ENCODE measurements at regions of chr11 and their contacts with region 1.

Region 1: GRCh38 chr11:12200279-12201010 is 90.1 kb downstream of the MICAL2 start:
- DNase-seq: peak in 1 of 4 experiments; percentile 32
- ATAC-seq: peak; percentile 1; the same call in 1 of the 3 replicates
- H3K4me3 ChIP-seq: no peak overlapping the region
- H3K27ac ChIP-seq: peak overlapping the region; percentile 89
- H3K4me1 ChIP-seq: peaks cover 28 to 58% of the 10 kb centered on the region in 2 experiments
- H3K27me3 ChIP-seq: no peaks in the 10 kb centered on the region; a peak in 1 of 5 replicates
- CTCF ChIP-seq: no peak
- EP300 ChIP-seq: no peak
- POLR2A ChIP-seq: no peak
- RAD21 ChIP-seq: no peak

Region 2: GRCh38 chr11:12087075-12088004 is 113.1 kb before region 1 on chr11:
- CTCF ChIA-PET with region 1: no interaction called
- POLR2A ChIA-PET with region 1: no interaction called
- in situ Hi-C with region 1: no loop called
- intact Hi-C with region 1: loop called (anchors 1 kb)
- DNase-seq: peak in 2 of 4 experiments; percentile 28 to 31
- ATAC-seq: peak; percentile 58
- H3K4me3 ChIP-seq: no peak overlapping the region
- H3K27ac ChIP-seq: no peak overlapping the region
- H3K4me1 ChIP-seq: peaks cover 14 to 20% of the 10 kb centered on the region in 2 experiments
- H3K27me3 ChIP-seq: peaks cover 0 to 9% of the 10 kb centered on the region in 2 experiments; a peak in 1 of 5 replicates
- CTCF ChIP-seq: no peak
- EP300 ChIP-seq: no peak
- POLR2A ChIP-seq: no peak
- RAD21 ChIP-seq: no peak

Region 3: DNA sequence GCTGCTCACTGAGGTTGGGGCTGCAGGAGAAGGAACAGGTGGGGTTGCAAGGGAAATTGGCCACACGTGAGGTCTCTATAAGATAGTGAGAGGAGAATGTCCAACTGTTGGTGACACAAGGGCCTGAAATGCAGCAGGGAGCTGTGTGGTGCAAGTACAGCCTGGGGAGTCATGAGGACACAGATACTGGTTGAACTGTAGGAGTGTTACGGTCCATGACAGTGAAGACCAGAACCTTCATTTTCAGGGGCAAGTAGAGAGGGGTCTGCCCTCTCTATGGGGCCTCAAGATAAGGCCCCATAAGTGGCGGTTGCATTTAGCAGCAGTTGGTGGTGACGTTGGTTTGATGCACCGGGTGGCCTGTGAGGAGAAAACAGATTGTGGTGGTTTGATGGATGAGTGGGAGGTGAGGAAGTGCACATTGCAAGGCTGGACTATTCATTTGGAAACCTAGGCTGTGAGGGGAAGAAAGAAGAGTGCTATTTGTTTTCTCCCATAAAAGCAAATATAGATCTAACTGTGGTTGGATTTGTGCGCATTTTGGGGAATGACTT is 50.7 kb before region 1 on chr11:
- CTCF ChIA-PET with region 1: no interaction called
- POLR2A ChIA-PET with region 1: interaction called, 7 read pairs
- in situ Hi-C with region 1: no loop called
- intact Hi-C with region 1: loop called (anchors 2 kb)
- DNase-seq: peak; percentile 58 to 91 (median 74)
- ATAC-seq: peak; percentile 82
- H3K4me3 ChIP-seq: peak overlapping the region; percentile 11; the same call in 1 of the 2 replicates
- H3K27ac ChIP-seq: peak overlapping the region; percentile 97
- H3K4me1 ChIP-seq: peaks cover 32 to 51% of the 10 kb centered on the region in 2 experiments
- H3K27me3 ChIP-seq: no peaks in the 10 kb centered on the region
- CTCF ChIP-seq: no peak
- EP300 ChIP-seq: peak; percentile 91
- POLR2A ChIP-seq: 0 out of 2 replicates have a peak, but pooled peaks have one; percentile 25
- RAD21 ChIP-seq: peak in 1 of 2 experiments; percentile 20; a peak in 3 of 4 replicates

Region 4: DNA sequence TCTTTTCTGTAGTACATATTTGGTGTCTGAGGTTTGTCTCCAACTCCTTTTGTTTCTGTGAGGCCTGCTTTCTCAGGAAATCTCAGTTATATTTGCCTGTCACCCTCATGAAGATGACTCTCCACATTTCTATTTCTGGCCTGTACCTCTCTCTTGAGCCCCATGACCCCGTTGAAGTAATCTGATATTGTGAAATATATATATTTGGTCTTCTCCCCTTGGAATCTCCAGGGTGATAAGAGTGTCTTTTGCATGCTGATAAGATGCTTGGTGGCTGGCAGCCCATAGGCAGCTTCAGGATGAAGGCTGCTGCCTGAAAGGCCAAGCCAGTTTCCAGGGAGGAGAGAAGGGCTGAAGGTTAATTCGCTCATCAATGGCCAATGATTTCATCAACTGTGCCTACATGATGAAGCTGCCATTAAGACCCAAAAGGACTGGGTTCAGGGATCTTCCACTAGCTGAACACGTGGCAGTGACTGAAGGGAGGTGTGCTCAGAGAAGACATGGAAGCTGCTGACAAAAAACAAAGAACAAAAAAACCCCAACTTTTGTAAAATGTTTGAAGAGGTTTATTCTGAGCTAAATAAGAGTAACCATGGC is 22.6 kb before region 1 on chr11:
- CTCF ChIA-PET with region 1: no interaction called
- POLR2A ChIA-PET with region 1: interaction called, 10 read pairs
- in situ Hi-C with region 1: no loop called
- intact Hi-C with region 1: loop called (anchors 2 kb)
- DNase-seq: peak in 1 of 4 experiments; percentile 59
- ATAC-seq: no peak
- H3K4me3 ChIP-seq: no peak overlapping the region
- H3K27ac ChIP-seq: no peak overlapping the region
- H3K4me1 ChIP-seq: peaks cover 30 to 66% of the 10 kb centered on the region in 2 experiments
- H3K27me3 ChIP-seq: no peaks in the 10 kb centered on the region
- CTCF ChIP-seq: no peak
- EP300 ChIP-seq: peak; percentile 69; the same call in 1 of the 2 replicates
- POLR2A ChIP-seq: no peak
- RAD21 ChIP-seq: no peak

Region 5: DNA sequence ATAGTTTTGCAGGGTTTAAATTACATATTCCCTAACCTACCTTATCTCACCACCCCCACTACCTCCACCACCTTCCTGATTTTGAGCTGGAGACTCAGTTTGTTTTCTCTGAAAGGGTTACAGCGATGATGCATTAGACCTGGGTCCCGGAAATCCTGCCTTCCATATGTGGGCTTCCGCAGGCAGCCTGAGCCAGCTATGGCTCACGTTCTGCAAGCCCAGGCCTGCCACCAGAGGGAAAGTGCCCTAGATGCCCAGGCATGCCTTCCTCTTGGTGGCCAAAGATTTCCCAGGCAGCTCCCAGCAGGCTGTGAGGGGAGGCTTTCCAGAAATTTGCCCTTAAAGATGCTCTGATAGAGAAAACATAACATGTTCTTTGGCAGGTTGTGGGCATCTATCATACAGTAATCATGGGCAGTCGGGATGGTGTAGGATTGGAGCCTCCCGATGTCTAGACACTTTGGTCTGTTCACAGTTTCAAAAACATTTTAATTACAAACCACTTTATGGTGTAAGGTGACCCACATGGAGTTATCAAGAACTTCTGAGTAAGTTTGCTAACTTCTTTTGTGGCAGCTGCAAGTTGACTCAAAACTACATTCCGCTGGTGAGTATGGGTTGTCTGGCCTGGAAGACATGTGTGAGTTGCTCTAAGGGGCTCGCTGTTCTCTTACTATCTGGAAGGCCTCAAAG is 10.8 kb before region 1 on chr11:
- CTCF ChIA-PET with region 1: no interaction called
- POLR2A ChIA-PET with region 1: interaction called, 15 read pairs
- in situ Hi-C with region 1: no loop called
- intact Hi-C with region 1: no loop called
- DNase-seq: no peak
- ATAC-seq: no peak
- H3K4me3 ChIP-seq: no peak overlapping the region
- H3K27ac ChIP-seq: no peak overlapping the region
- H3K4me1 ChIP-seq: peaks cover 28 to 32% of the 10 kb centered on the region in 2 experiments; a peak in 3 of 5 replicates
- H3K27me3 ChIP-seq: no peaks in the 10 kb centered on the region
- CTCF ChIP-seq: no peak
- EP300 ChIP-seq: no peak
- POLR2A ChIP-seq: no peak
- RAD21 ChIP-seq: no peak

Region 6: DNA sequence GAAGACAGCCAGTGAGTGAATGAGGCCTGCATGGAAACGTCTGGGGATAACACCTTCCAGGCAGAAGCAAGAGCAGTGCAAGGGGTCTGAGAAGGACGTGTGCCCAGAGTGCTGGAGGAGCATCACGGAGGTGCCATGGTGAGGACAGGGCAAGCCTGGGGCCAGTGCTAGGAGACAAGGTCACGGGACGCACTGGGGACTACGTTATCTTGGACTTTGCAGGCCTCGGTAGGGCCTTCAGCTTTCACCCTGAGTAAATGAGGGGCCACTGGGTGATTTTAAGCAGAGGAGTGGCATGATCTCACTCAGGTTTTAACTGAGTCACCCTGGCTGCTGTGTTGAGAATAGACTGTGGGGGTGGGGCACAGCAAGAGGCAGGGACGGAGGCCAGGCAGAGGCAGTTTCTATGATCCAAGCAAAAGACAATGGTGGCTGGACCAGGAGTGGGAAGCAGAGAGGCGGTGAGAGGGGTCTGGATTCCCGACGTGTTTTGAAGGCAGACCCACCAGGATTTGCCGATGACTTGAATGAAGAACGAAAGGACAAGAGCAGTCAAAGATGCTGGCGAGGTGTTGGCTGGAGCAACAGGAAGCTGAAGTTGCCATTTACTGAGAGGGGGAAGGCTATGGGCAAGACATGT is 74.2 kb after region 1 on chr11:
- CTCF ChIA-PET with region 1: no interaction called
- POLR2A ChIA-PET with region 1: interaction called, 4 read pairs
- in situ Hi-C with region 1: no loop called
- intact Hi-C with region 1: loop called (anchors 2 kb)
- DNase-seq: peak; percentile 65 to 89 (median 71)
- ATAC-seq: peak; percentile 92
- H3K4me3 ChIP-seq: no peak overlapping the region
- H3K27ac ChIP-seq: peak overlapping the region; percentile 72
- H3K4me1 ChIP-seq: peaks cover 20 to 27% of the 10 kb centered on the region in 2 experiments
- H3K27me3 ChIP-seq: no peaks in the 10 kb centered on the region
- CTCF ChIP-seq: no peak
- EP300 ChIP-seq: peak; percentile 72; the same call in 1 of the 2 replicates
- POLR2A ChIP-seq: no peak
- RAD21 ChIP-seq: peak in 1 of 2 experiments; percentile 12; a peak in 1 of 4 replicates